H1 (cell line): ENCODE measurements at regions of chr3 and their contacts with region 1.

Region 1: DNA sequence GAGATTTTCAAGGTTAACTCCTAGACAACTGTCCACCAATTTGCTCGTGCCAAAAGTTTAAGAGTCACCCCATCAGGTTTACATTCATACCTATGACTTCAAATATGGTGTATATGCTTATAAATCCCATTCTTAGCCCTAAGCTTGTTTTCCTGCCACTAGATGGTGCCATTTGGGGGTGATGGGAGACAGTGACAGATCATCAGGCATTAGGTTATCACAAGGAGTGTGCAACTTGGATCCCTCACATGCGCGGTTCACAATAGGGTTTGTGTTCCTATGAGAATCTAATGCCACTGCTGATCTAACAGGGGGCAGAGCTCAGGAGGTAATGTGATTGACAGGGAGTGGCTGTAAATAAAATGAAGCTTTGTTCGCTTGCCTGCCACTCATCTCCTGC is 182.7 kb downstream of the CNTN6 start:
- DNase-seq: no peak
- H3K4me3 ChIP-seq: no peak overlapping the region
- H3K27ac ChIP-seq: no peak overlapping the region
- H3K4me1 ChIP-seq: no peaks in the 10 kb centered on the region
- H3K27me3 ChIP-seq: no peaks in the 10 kb centered on the region
- CTCF ChIP-seq: peak in 2 of 3 experiments; percentile 51 to 62; a peak in 3 of 4 replicates
- EP300 ChIP-seq: no peak
- POLR2A ChIP-seq: no peak
- RAD21 ChIP-seq: peak; percentile 63 to 70

Region 2: DNA sequence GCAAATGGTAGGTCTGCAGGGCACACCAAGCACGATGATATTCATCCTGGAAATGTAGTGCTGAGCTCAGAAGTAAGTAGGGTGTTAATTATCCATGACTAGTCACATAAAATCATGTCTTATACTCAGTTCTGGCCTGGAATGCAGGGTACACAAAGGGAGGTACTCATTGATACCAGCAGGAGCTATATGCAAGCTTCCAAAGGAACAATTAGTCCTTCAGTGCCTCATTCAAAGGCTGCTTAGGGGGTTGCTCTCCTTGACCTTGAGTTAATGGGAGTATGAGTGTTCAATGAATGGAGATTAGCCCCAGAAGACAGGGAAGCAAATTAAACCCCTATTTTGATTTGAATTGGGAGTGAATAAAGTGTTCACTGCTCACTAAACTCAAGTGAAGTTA is 144.3 kb before region 1 on chr3:
- CTCF ChIA-PET with region 1: no interaction called
- POLR2A ChIA-PET with region 1: no interaction called
- DNase-seq: no peak
- H3K4me3 ChIP-seq: no peak overlapping the region
- H3K27ac ChIP-seq: no peak overlapping the region
- H3K4me1 ChIP-seq: peaks cover 0 to 9% (median 4%) of the 10 kb centered on the region in 4 experiments; a peak in 3 of 7 replicates
- H3K27me3 ChIP-seq: no peaks in the 10 kb centered on the region
- CTCF ChIP-seq: no peak
- EP300 ChIP-seq: no peak
- POLR2A ChIP-seq: no peak
- RAD21 ChIP-seq: no peak

Region 3: DNA sequence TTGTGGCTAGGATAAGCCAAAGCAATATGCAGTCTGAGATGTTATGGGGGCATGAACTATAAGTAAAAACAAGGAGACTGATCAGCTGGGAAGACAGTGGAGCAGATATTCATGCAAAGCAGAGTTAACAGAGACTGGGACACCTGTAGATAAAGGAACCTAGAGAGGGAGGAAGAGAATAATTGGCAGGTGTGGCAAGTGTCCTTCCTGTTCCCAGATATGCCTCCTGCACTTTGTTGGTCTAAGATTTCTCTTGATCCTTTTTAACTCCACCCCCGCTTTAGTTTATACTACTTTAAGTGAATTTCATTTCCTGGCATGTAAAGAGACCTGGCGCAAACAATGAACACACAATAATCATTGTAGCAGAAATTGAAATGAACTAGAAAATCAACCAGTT is 13.2 kb before region 1 on chr3:
- CTCF ChIA-PET with region 1: interaction called, 14 read pairs
- POLR2A ChIA-PET with region 1: no interaction called
- DNase-seq: no peak
- H3K4me3 ChIP-seq: no peak overlapping the region
- H3K27ac ChIP-seq: no peak overlapping the region
- H3K4me1 ChIP-seq: no peaks in the 10 kb centered on the region
- H3K27me3 ChIP-seq: no peaks in the 10 kb centered on the region
- CTCF ChIP-seq: no peak
- EP300 ChIP-seq: no peak
- POLR2A ChIP-seq: no peak
- RAD21 ChIP-seq: no peak

Region 4: DNA sequence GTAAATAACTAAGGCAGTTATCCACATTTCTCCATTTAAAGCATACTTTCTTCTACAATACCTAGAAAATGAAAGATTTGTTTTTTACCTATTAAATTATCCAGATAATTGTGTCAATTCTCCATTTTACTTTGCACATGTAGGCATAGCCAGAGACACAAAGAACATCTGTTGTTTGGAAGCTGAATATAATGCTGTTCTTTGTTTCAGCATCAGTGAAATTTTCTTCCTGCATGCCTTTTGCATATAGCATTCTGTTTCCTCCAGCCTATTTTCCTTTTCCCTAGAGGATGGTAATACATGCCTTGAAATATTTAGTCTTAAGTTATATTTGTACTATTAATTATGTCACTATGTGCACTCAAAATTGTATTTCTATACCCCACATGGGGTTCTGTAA is 51.1 kb after region 1 on chr3:
- CTCF ChIA-PET with region 1: no interaction called
- POLR2A ChIA-PET with region 1: no interaction called
- DNase-seq: no peak
- H3K4me3 ChIP-seq: no peak overlapping the region
- H3K27ac ChIP-seq: no peak overlapping the region
- H3K4me1 ChIP-seq: peaks cover 0 to 3% (median 0%) of the 10 kb centered on the region in 4 experiments; a peak in 1 of 7 replicates
- H3K27me3 ChIP-seq: no peaks in the 10 kb centered on the region
- CTCF ChIP-seq: no peak
- EP300 ChIP-seq: no peak
- POLR2A ChIP-seq: no peak
- RAD21 ChIP-seq: no peak

Region 5: DNA sequence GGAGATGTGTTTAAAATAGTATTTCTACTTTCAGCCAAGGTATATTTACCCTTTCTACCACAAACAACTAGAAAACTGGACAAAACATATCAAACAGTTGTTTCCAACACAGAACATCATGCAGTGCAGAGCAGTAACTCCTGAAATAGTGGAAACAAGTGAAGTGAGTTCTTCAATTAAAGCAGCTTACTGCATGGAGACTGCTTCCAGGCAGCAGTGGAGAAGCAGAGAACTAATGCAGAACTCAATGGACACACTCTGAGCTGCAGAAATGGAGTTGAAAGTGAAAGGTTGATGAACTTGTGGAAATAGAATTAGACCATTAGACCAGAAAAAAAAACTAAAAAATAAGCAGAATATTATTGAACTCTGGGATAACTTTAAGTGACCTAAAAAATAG is 296.2 kb after region 1 on chr3:
- CTCF ChIA-PET with region 1: no interaction called
- POLR2A ChIA-PET with region 1: no interaction called
- DNase-seq: no peak
- H3K4me3 ChIP-seq: no peak overlapping the region
- H3K27ac ChIP-seq: no peak overlapping the region
- H3K4me1 ChIP-seq: no peaks in the 10 kb centered on the region
- H3K27me3 ChIP-seq: no peaks in the 10 kb centered on the region
- CTCF ChIP-seq: no peak
- EP300 ChIP-seq: no peak
- POLR2A ChIP-seq: no peak
- RAD21 ChIP-seq: no peak